Activated B cell treated with CpG ODN at 0.5 μM for 24 hours (primary cell): ENCODE measurements at regions of chr6 and their contacts with region 1.

Region 1: GRCh38 chr6:129251669-129252376 is 368.9 kb downstream of the LAMA2 start:
- DNase-seq: no peak
- ATAC-seq: peak; percentile 77
- H3K4me3 Mint-ChIP-seq: no peak overlapping the region
- H3K27ac Mint-ChIP-seq: no peak overlapping the region
- H3K4me1 Mint-ChIP-seq: peaks cover 6% of the 10 kb centered on the region
- H3K27me3 Mint-ChIP-seq: no peaks in the 10 kb centered on the region
- CTCF ChIP-seq: no peak

Region 2: GRCh38 chr6:128725271-128726233 is 526.3 kb before region 1 on chr6:
- CTCF ChIA-PET with region 1: interaction called, 11 read pairs
- POLR2A ChIA-PET with region 1: no interaction called
- intact Hi-C with region 1: loop called (anchors 1 kb)
- DNase-seq: no peak
- ATAC-seq: no peak
- H3K4me3 Mint-ChIP-seq: no peak overlapping the region
- H3K27ac Mint-ChIP-seq: no peak overlapping the region
- H3K4me1 Mint-ChIP-seq: no peaks in the 10 kb centered on the region
- H3K27me3 Mint-ChIP-seq: no peaks in the 10 kb centered on the region
- CTCF ChIP-seq: peak; percentile 52

Region 3: GRCh38 chr6:128807577-128807976 is 444.2 kb before region 1 on chr6:
- CTCF ChIA-PET with region 1: interaction called, 22 read pairs
- POLR2A ChIA-PET with region 1: no interaction called
- intact Hi-C with region 1: loop called (anchors 1 kb)
- DNase-seq: no peak
- ATAC-seq: no peak
- H3K4me3 Mint-ChIP-seq: no peak overlapping the region
- H3K27ac Mint-ChIP-seq: no peak overlapping the region
- H3K4me1 Mint-ChIP-seq: no peaks in the 10 kb centered on the region
- H3K27me3 Mint-ChIP-seq: no peaks in the 10 kb centered on the region
- CTCF ChIP-seq: no peak

Region 4: GRCh38 chr6:128979071-128979470 is 272.8 kb before region 1 on chr6:
- CTCF ChIA-PET with region 1: no interaction called
- POLR2A ChIA-PET with region 1: no interaction called
- intact Hi-C with region 1: loop called (anchors 1 kb)
- DNase-seq: no peak
- ATAC-seq: no peak
- H3K4me3 Mint-ChIP-seq: no peak overlapping the region
- H3K27ac Mint-ChIP-seq: no peak overlapping the region
- H3K4me1 Mint-ChIP-seq: no peaks in the 10 kb centered on the region
- H3K27me3 Mint-ChIP-seq: no peaks in the 10 kb centered on the region
- CTCF ChIP-seq: no peak